Left ventricle myocardium inferior (tissue), 1 donor: ENCODE measurements at regions of chr10 and their contacts with region 1.

Region 1: GRCh38 chr10:63707254-63707910 is 186.2 kb downstream of the REEP3 start:
- DNase-seq: no peak
- H3K4me3 ChIP-seq: no peak overlapping the region
- H3K27ac ChIP-seq: peak overlapping the region; percentile 68
- H3K4me1 ChIP-seq: peaks cover 44% of the 10 kb centered on the region
- H3K27me3 ChIP-seq: no peaks in the 10 kb centered on the region
- CTCF ChIP-seq: no peak

Region 2: DNA sequence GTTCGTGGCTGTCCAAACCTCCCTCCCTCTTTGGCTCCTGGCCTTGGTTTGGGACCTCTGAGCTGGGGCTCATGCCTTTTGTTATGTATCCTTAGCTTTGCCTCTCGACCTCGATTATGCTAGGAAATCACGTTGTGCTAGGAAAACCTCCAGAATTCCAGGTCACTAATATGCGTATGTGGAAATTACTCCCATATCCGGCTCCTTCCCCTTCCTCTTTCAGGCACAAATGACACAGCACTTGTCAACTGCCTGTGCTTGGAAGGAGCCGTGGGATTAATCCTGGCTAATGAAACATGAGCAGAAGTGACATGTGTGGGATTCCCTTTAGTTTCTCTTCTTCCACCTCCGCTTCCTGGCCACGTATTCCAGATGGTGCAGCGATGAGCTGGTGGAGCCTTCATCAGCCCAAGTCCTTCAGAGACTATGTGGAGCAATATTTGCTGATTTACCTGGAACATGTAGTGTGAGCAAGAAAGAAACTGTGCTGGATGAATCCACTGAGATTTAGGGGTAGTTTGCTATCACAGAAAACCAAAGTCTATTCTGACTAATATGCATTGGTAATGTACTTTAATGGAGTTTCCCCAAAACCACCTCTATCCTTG is 37.0 kb before region 1 on chr10:
- intact Hi-C with region 1: loop called (anchors 5 kb)
- DNase-seq: no peak
- H3K4me3 ChIP-seq: peak overlapping the region; percentile 18
- H3K27ac ChIP-seq: peak overlapping the region; percentile 84
- H3K4me1 ChIP-seq: peaks cover 70% of the 10 kb centered on the region
- H3K27me3 ChIP-seq: no peaks in the 10 kb centered on the region
- CTCF ChIP-seq: no peak

Region 3: GRCh38 chr10:63760034-63760707 is 52.8 kb after region 1 on chr10:
- intact Hi-C with region 1: no loop called
- DNase-seq: no peak
- H3K4me3 ChIP-seq: no peak overlapping the region
- H3K27ac ChIP-seq: peak overlapping the region; percentile 68
- H3K4me1 ChIP-seq: peaks cover 13% of the 10 kb centered on the region
- H3K27me3 ChIP-seq: no peaks in the 10 kb centered on the region
- CTCF ChIP-seq: no peak

Region 4: DNA sequence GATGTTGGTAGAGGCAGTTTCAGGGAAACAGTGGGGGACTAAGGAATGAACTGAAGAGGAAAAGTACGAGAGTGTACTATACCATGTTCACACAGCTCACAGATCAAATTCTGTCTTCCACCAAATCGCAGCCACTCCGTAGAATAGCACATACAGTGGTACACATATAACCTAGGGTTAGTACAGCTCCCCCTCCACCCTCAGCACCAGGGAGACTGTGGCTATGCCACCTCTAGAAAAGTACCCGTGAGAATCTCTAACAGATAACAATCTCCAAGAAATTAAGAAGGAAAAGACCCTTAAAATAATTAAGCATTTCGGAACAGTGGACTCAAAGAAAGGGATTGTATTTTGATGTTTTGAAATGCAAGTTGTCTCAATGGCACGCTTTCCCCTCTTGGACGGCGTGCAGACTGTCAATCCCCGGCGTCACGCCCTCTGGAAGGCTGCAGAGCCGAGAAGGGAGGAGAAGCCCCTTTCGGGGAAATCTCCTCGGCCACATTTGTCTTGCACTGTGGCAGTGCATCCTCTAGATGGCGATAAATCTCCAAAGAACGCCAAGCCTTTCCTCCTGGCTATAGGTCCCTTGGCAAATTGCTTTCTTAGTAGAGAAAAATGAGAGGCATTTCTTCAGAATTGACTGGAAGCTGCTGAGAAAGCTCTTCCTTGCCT is 158.8 kb after region 1 on chr10:
- intact Hi-C with region 1: no loop called
- DNase-seq: no peak
- H3K4me3 ChIP-seq: no peak overlapping the region
- H3K27ac ChIP-seq: no peak overlapping the region
- H3K4me1 ChIP-seq: peaks cover 12% of the 10 kb centered on the region
- H3K27me3 ChIP-seq: peaks cover 51% of the 10 kb centered on the region
- CTCF ChIP-seq: peak; percentile 91

Region 5: GRCh38 chr10:63935705-63936104 is 228.3 kb after region 1 on chr10:
- intact Hi-C with region 1: no loop called
- DNase-seq: no peak
- H3K4me3 ChIP-seq: no peak overlapping the region
- H3K27ac ChIP-seq: no peak overlapping the region
- H3K4me1 ChIP-seq: no peaks in the 10 kb centered on the region
- H3K27me3 ChIP-seq: no peaks in the 10 kb centered on the region
- CTCF ChIP-seq: no peak